CD8-positive, alpha-beta T cell (primary cell): ENCODE measurements at regions of chr13 and their contacts with region 1.

Region 1: GRCh38 chr13:23375001-23375971 is 58.2 kb downstream of the SACS start:
- DNase-seq: peak; percentile 95 to 99 (median 97)
- ATAC-seq: peak; percentile 87
- H3K4me3 ChIP-seq: peak overlapping the region; percentile 52 to 69
- H3K4me3 Mint-ChIP-seq: peak overlapping the region; percentile 81
- H3K27ac ChIP-seq: peak overlapping the region; percentile 42 to 68
- H3K27ac Mint-ChIP-seq: peak overlapping the region; percentile 58
- H3K4me1 ChIP-seq: peaks cover 37% of the 10 kb centered on the region
- H3K4me1 Mint-ChIP-seq: peaks cover 57% of the 10 kb centered on the region
- H3K27me3 ChIP-seq: no peaks in the 10 kb centered on the region
- H3K27me3 Mint-ChIP-seq: no peaks in the 10 kb centered on the region
- CTCF ChIP-seq: peak; percentile 37

Region 2: DNA sequence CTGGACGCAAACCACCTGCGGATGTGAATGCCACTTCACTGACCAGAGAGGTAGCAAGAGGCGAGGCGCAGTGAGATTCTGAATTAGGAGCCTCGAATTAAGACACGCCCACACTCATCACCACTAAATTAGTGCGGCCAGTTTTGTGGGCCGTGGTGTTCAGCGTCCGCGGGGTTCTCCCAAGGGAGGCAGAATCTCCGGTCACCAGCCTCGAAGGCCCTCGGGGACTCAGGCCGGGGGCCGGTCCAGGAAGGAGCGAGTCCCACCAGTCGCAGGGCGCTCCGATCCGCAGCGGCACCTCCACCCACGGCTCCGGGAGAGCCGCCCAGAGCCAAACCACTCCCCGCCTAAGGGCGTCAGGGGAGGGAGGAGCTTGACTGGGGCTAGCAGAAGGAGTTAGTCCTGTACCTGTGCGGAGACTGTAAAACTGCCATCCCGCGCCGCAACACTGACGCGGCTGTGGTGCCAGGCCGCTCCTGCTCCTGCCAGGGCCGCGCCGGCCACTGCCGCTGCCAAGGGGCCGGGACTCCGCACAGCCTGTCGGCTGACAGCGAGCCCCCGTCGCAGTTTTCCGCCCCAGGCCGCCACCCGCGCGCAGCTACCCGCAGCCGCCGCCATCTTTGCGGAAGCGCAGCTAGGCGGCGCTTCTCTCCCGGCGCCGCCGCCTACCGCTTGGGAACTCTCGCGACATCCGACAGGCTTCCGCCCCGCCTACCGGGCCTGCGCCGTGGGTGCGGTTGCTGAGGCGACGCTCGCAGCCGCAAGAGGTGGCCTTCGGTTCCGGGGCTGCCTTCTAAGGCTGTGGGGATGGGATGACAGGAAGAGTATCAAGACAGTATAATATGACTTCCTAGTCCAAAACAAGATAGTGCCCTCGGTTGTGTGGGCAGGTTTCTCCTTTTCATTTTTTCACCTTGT is 1771.5 kb before region 1 on chr13 and contains the start of gene MICU2:
- CTCF ChIA-PET with region 1: no interaction called
- POLR2A ChIA-PET with region 1: no interaction called
- intact Hi-C with region 1: loop called in 1 of 2 experiments (anchors 5 kb)
- DNase-seq: peak; percentile 91 to 98 (median 96)
- ATAC-seq: peak; percentile 92
- H3K4me3 ChIP-seq: peak within 1 kb of the TSS; percentile 73 to 85
- H3K4me3 Mint-ChIP-seq: peak within 1 kb of the TSS; percentile 84
- H3K27ac ChIP-seq: peak within 1 kb of the TSS; percentile 84 to 97
- H3K27ac Mint-ChIP-seq: peak within 1 kb of the TSS; percentile 94
- H3K4me1 ChIP-seq: peaks cover 24% of the 10 kb centered on the region
- H3K4me1 Mint-ChIP-seq: peaks cover 47% of the 10 kb centered on the region
- H3K27me3 ChIP-seq: no peaks in the 10 kb centered on the region
- H3K27me3 Mint-ChIP-seq: peaks cover 9% of the 10 kb centered on the region
- CTCF ChIP-seq: no peak
- total RNA-seq, gene MICU2: 28.3 to 36.0 TPM

Region 3: GRCh38 chr13:23695711-23696464 is 320.6 kb after region 1 on chr13:
- CTCF ChIA-PET with region 1: no interaction called
- POLR2A ChIA-PET with region 1: no interaction called
- intact Hi-C with region 1: loop called in 1 of 2 experiments (anchors 5 kb)
- DNase-seq: peak; percentile 13 to 85 (median 60)
- ATAC-seq: peak; percentile 92
- H3K4me3 ChIP-seq: peak overlapping the region; percentile 38 to 46
- H3K4me3 Mint-ChIP-seq: peak overlapping the region; percentile 83
- H3K27ac ChIP-seq: peak overlapping the region; percentile 66 to 76
- H3K27ac Mint-ChIP-seq: peak overlapping the region; percentile 96
- H3K4me1 ChIP-seq: peaks cover 9% of the 10 kb centered on the region
- H3K4me1 Mint-ChIP-seq: peaks cover 16% of the 10 kb centered on the region
- H3K27me3 ChIP-seq: no peaks in the 10 kb centered on the region
- H3K27me3 Mint-ChIP-seq: no peaks in the 10 kb centered on the region
- CTCF ChIP-seq: no peak

Region 4: GRCh38 chr13:24228852-24229458 is 853.7 kb after region 1 on chr13:
- CTCF ChIA-PET with region 1: no interaction called
- POLR2A ChIA-PET with region 1: no interaction called
- intact Hi-C with region 1: loop called in 1 of 2 experiments (anchors 5 kb)
- DNase-seq: peak in 5 of 9 experiments; percentile 34 to 80 (median 49)
- ATAC-seq: peak; percentile 51
- H3K4me3 ChIP-seq: no peak overlapping the region
- H3K4me3 Mint-ChIP-seq: no peak overlapping the region
- H3K27ac ChIP-seq: no peak overlapping the region
- H3K27ac Mint-ChIP-seq: no peak overlapping the region
- H3K4me1 ChIP-seq: peaks cover 23% of the 10 kb centered on the region
- H3K4me1 Mint-ChIP-seq: peaks cover 51% of the 10 kb centered on the region
- H3K27me3 ChIP-seq: no peaks in the 10 kb centered on the region
- H3K27me3 Mint-ChIP-seq: no peaks in the 10 kb centered on the region
- CTCF ChIP-seq: peak; percentile 93

Region 5: DNA sequence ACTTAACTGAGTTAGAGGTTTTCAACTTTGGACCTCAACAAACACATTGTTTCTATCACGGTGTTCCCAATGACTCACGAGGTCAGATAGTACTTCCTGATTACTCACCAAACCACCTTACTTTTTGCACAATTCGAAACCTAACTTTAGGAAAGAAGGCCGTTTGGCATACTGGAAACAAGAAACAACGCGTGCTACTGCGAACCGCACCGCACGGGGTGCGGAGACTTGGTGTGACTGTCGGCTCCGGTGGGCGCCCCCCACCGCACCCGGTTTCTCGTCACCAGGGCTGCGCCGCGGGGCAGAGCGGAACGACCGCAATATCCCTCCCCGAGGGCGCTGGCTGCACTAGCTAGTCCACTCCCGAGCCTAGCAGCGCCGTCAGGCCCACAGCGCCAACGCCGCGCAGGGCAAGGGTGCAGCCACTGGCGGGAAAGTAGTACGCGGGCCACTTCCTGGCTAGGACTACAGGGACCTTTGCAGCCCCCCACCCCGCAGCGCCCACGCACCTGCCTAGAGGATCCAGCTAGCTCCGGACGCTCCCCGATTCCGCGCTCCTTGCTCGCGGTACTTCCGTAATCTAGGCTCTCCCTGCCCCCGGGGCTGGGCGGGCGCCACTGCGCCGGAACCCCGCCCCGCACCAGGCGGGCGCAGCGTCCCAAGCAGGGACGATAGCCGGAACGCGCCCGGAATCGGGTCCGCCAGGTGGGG is 1137.1 kb after region 1 on chr13 and contains the start of gene PARP4:
- CTCF ChIA-PET with region 1: no interaction called
- POLR2A ChIA-PET with region 1: no interaction called
- intact Hi-C with region 1: loop called (anchors 1 to 5 kb)
- DNase-seq: peak in 8 of 9 experiments; percentile 53 to 84 (median 66)
- ATAC-seq: peak; percentile 71
- H3K4me3 ChIP-seq: peak within 1 kb of the TSS; percentile 70 to 98
- H3K4me3 Mint-ChIP-seq: peak within 1 kb of the TSS; percentile 87
- H3K27ac ChIP-seq: peak within 1 kb of the TSS; percentile 66 to 83
- H3K27ac Mint-ChIP-seq: peak within 1 kb of the TSS; percentile 92
- H3K4me1 ChIP-seq: peaks cover 12% of the 10 kb centered on the region
- H3K4me1 Mint-ChIP-seq: peaks cover 31% of the 10 kb centered on the region
- H3K27me3 ChIP-seq: no peaks in the 10 kb centered on the region
- H3K27me3 Mint-ChIP-seq: no peaks in the 10 kb centered on the region
- CTCF ChIP-seq: no peak
- total RNA-seq, gene PARP4: 20.1 to 21.8 TPM